ENCODE measurements at regions of chr1 and their contacts with region 1.

Region 1: GRCh38 chr1:92858564-92859399 is 26.9 kb downstream of the RPL5 start:
- DNase-seq: no peak
- ATAC-seq: peak; percentile 91 to 94
- H3K4me3 ChIP-seq: peak overlapping the region; percentile 20
- H3K27ac ChIP-seq: no peak overlapping the region
- H3K4me1 ChIP-seq: no peaks in the 10 kb centered on the region
- H3K27me3 ChIP-seq: no peaks in the 10 kb centered on the region
- CTCF ChIP-seq: peak; percentile 93

Region 2: GRCh38 chr1:92016720-92017316 is 842.0 kb before region 1 on chr1:
- intact Hi-C with region 1: no loop called
- DNase-seq: no peak
- ATAC-seq: no peak
- H3K4me3 ChIP-seq: no peak overlapping the region
- H3K27ac ChIP-seq: no peak overlapping the region
- H3K4me1 ChIP-seq: no peaks in the 10 kb centered on the region
- H3K27me3 ChIP-seq: no peaks in the 10 kb centered on the region
- CTCF ChIP-seq: no peak

Region 3: DNA sequence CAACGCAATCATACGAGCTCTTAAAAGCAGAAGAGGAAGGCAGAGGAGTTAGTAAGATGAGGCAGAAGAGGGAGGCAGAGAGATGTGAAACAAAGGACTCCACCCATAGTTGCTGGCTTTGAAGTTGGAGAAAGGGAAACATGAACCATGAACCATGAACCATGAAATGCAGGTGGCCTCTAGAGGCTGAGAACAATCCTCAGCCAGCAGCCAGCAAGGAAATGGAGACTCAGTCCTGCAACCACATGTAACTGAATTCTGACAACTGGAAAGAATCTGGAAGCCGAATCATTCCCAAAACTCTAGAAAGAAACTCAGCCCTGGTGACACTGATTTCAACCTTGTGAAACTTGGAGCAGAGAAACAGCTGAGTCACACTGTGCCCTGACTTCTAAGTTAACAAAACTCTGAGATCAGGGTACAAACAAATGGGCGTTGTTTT is 92.4 kb after region 1 on chr1:
- intact Hi-C with region 1: no loop called
- DNase-seq: no peak
- ATAC-seq: peak; percentile 41 to 61
- H3K4me3 ChIP-seq: no peak overlapping the region
- H3K27ac ChIP-seq: no peak overlapping the region
- H3K4me1 ChIP-seq: peaks cover 11% of the 10 kb centered on the region
- H3K27me3 ChIP-seq: no peaks in the 10 kb centered on the region
- CTCF ChIP-seq: no peak

Region 4: DNA sequence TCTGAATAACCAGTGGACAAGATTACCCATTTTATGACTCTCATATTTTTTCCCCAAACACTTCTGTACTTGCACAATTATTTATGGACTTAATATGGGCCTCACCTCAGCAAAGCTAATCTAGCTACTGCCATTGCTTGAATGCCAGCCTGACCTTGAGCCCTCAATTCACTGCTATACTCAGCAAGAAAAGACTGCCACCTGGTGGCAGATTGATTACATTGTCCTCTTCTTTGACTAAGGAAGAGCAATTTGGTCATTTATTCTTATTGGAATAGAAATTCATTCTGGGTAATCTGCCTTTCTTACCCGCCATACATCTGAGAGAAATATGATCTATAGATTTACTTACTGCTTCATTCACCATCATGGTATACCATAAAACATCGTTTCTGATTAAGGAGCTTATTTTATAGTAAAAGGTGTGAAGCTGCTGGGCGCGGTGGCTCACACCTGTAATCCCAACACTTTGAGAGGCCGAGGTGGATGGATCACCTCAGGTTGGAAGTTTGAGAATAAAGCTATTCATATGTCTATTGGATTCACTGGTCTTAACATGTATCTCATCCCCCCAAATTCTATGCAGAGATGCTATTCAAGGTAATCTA is 135.4 kb after region 1 on chr1:
- intact Hi-C with region 1: loop called (anchors 5 kb)
- DNase-seq: no peak
- ATAC-seq: peak; percentile 85 to 87
- H3K4me3 ChIP-seq: no peak overlapping the region
- H3K27ac ChIP-seq: no peak overlapping the region
- H3K4me1 ChIP-seq: peaks cover 6% of the 10 kb centered on the region
- H3K27me3 ChIP-seq: no peaks in the 10 kb centered on the region
- CTCF ChIP-seq: peak; percentile 78

Measured in lower lobe of right lung (tissue), 2 donors.